ENCODE measurements at regions of chr2 and their contacts with region 1.

Region 1: DNA sequence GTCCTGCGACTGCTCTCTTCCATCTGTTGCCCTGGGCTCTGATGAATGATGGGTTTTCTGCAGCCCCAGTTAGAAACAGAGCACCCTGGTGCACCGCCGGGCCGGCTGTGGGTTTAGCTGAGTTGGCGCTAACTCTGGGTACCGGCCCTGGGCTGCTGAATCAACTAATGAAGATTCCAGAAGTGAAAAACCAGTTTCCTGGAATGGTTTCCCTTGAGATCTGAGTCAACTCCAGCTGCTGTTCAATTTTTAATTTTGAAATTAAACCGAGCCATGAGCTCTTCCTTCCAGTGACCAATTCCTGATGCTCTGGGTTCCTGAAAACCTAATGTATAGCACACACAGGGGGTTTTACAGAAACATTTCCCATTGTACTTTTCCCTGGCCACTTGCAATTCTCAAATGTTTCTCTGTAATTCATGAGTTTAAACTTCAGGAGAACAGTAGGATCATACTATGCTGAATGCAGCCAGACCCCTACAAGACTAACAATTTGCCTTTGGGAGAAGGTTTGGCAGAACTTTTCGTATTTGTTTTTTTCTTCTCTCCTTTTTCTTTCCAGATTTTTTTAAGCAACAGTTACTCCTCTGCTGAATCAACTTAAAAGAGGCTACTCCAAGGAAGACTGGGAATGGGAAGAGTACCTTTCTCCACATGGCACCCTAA is 5.5 kb downstream of the COL6A3 start:
- DNase-seq: no peak
- H3K4me3 ChIP-seq: peak overlapping the region; percentile 44
- CTCF ChIP-seq: no peak

Region 2: DNA sequence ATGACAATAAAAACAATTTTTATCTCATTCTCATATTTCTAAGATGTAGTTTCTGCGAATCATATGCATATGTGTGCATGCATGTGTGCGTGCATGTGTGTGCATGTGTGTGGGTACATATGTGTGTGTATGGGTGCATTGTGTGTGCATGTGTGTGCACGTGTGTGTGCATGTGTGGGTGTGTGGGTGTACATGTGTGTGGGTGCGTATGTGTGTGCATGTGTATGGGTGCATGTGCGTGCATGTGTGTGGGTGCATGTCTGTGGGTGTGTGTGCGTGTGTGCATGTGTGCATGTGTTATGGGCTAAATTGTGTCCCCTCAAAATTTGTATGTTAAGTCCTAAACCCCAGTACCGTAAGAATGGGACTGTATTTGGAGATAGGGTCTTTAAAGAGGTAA is 43.8 kb before region 1 on chr2:
- CTCF ChIA-PET with region 1: no interaction called
- POLR2A ChIA-PET with region 1: no interaction called
- DNase-seq: no peak
- H3K4me3 ChIP-seq: no peak overlapping the region
- CTCF ChIP-seq: no peak

Region 3: DNA sequence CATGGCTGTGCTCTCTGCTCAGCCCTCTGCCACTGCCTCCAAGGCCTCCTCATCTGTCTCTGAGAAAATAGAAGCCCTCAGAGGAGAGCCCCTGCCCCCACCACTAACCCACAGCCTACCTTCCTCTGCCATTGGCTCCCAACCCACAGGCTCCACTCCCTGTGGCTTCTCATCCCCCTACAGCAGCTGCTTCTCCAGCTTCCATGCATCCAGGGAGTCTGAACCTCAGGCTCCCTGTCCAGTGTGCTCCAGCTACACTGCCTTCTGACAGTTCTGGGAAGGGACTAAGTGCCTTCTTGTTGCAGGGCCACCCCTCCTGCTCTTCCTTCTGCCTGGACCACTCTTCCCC is 23.8 kb before region 1 on chr2:
- CTCF ChIA-PET with region 1: interaction called, 17 read pairs
- POLR2A ChIA-PET with region 1: no interaction called
- DNase-seq: no peak
- H3K4me3 ChIP-seq: no peak overlapping the region
- CTCF ChIP-seq: no peak

Region 4: DNA sequence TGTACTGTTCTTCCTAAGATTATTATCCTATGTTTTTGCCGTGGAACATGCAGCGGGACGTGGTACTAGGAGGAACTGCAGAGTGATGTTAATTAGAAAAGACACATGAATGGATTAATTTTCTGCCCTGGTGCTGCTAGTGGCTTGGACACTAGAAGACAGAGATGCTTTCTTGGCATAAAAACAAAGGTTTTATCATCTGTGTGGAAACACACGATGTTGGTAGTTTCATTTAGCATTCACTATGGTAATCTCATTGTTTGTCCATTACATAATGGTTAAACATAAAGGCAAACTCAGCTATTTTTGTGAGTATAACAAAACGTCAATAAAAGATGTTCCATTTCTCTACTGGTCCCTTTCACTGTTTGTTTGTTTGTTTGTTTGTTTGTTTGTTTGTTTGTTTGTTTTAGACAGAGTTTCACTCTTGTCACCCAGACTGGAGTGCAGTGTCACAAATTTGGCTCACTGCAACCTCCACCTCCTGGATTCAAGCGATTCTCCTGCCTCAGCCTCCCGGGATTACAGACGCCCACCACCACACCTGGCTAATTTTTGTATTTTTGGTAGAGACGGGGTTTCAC is 17.2 kb before region 1 on chr2:
- CTCF ChIA-PET with region 1: interaction called, 17 read pairs
- POLR2A ChIA-PET with region 1: interaction called, 7 read pairs
- DNase-seq: no peak
- H3K4me3 ChIP-seq: no peak overlapping the region
- CTCF ChIP-seq: no peak

Measured in AG04449 (cell line).